Endothelial cell of umbilical vein (primary cell): ENCODE measurements at regions of chr17 and their contacts with region 1.

Region 1: GRCh38 chr17:47229535-47230443 is 20.6 kb downstream of the MYL4 start:
- DNase-seq: peak; percentile 93
- H3K4me3 ChIP-seq: no peak overlapping the region
- H3K27ac ChIP-seq: peak overlapping the region; percentile 38
- H3K4me1 ChIP-seq: peaks cover 30% of the 10 kb centered on the region
- H3K27me3 ChIP-seq: no peaks in the 10 kb centered on the region
- CTCF ChIP-seq: peak; percentile 98 to 99
- POLR2A ChIP-seq: peak; percentile 55

Region 2: DNA sequence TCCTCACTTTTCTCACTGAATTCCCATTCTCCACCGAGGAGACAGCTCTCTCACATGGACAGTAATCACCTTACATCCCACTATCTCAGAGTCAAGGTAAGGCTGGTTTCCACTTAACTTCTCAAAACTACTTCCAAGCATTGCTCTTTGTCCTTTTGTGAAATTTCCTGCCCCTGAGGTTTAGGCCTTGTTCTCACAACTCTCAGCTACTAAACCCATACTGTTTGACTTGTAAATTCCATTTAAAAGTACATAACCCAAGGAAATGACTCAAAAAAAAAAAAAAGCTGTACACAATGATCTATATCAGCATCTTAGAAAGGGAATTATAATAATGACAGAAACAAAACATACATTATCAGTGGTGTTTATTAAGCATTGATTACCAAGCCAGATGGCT is 49.5 kb before region 1 on chr17:
- CTCF ChIA-PET with region 1: no interaction called
- POLR2A ChIA-PET with region 1: no interaction called
- dilution Hi-C with region 1: no loop called
- intact Hi-C with region 1: no loop called
- DNase-seq: peak; percentile 66
- H3K4me3 ChIP-seq: no peak overlapping the region
- H3K27ac ChIP-seq: peak overlapping the region; percentile 71
- H3K4me1 ChIP-seq: peaks cover 35% of the 10 kb centered on the region
- H3K27me3 ChIP-seq: no peaks in the 10 kb centered on the region
- CTCF ChIP-seq: no peak
- POLR2A ChIP-seq: no peak

Region 3: GRCh38 chr17:47253541-47254402 is 24.0 kb after region 1 on chr17 and contains the start of gene ITGB3:
- CTCF ChIA-PET with region 1: interaction called, 3 read pairs
- POLR2A ChIA-PET with region 1: no interaction called
- dilution Hi-C with region 1: no loop called
- intact Hi-C with region 1: loop called (anchors 1 kb)
- DNase-seq: peak; percentile 83
- H3K4me3 ChIP-seq: peak within 1 kb of the TSS; percentile 61 to 87 (median 68)
- H3K27ac ChIP-seq: peak within 1 kb of the TSS; percentile 37
- H3K4me1 ChIP-seq: peaks cover 38% of the 10 kb centered on the region
- H3K27me3 ChIP-seq: no peaks in the 10 kb centered on the region
- CTCF ChIP-seq: peak; percentile 55 to 66
- POLR2A ChIP-seq: peak; percentile 60
- total RNA-seq, gene ITGB3: 49.9 and 60.0 TPM in 2 replicates